ENCODE measurements at regions of chr12 and their contacts with region 1.

Region 1: GRCh38 chr12:51307655-51308593 is 16.1 kb downstream of the BIN2 start:
- DNase-seq: no peak
- H3K4me3 Mint-ChIP-seq: no peak overlapping the region
- H3K27ac Mint-ChIP-seq: peak overlapping the region; percentile 15
- H3K4me1 Mint-ChIP-seq: peaks cover 57% of the 10 kb centered on the region
- H3K27me3 Mint-ChIP-seq: no peaks in the 10 kb centered on the region

Region 2: DNA sequence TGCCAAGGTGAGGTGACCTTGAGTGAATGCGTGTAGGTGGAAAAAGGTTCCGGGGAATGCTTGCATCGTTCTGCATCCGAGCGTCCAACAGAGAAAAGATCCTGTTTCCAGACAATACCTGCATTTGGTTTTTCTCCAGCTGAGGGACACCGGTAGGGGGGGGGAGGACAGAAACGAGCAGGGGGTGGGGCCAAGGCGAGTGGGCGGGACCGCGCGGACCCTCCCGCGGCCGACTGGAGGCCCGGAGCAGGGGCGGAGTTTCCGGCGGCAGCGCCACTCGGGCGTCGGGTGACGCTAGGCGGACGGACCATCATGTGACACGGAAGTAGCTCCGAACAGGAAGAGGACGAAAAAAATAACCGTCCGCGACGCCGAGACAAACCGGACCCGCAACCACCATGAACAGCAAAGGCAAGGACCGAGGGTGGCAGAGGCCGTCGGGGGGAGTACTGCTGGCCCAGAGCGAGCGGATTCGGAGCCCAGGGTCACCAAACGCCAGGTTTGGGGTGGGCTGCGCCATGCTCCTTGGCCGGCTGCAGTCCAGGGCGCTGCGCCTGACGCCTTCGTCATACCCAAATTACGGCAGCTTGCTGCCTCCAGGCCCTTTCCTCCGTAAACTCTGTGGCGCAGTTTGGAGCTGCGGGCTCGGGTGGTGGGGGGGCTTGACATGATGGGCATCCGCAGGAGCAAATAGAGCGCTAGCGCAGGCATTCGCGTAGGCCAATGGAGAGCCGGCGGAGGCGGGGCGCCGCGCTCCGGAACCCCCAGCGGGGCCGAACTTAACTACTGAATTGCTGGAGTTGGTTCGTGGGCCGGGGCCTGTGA is 69.2 kb before region 1 on chr12 and contains the start of gene DAZAP2:
- CTCF ChIA-PET with region 1: no interaction called
- intact Hi-C with region 1: no loop called
- DNase-seq: peak; percentile 96
- H3K4me3 Mint-ChIP-seq: peak within 1 kb of the TSS; percentile 96
- H3K27ac Mint-ChIP-seq: peak within 1 kb of the TSS; percentile 99
- H3K4me1 Mint-ChIP-seq: peaks cover 37% of the 10 kb centered on the region
- H3K27me3 Mint-ChIP-seq: no peaks in the 10 kb centered on the region
- total RNA-seq, gene DAZAP2: 106 to 107 TPM

Region 3: DNA sequence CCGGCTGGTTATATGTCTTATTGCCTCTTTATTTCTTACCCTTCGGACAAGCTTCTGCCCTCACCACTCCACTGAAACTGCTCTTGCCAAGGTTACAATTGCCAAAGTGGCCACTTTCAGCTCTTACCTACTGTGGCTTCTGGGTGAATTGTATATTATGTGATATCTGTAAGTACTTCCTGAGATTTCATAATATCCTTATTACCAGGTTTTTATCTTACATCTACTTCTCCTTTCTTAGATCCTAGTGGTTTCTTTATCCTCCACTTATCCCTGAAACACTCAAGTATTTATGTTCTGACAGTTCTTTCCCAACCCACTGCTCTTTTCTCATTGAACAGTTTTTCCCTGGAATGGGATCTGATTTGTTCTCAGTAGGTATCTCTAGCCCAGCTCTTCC is 28.0 kb after region 1 on chr12:
- CTCF ChIA-PET with region 1: interaction called, 10 read pairs
- intact Hi-C with region 1: loop called (anchors 1 kb)
- DNase-seq: no peak
- H3K4me3 Mint-ChIP-seq: no peak overlapping the region
- H3K27ac Mint-ChIP-seq: no peak overlapping the region
- H3K4me1 Mint-ChIP-seq: peaks cover 8% of the 10 kb centered on the region
- H3K27me3 Mint-ChIP-seq: no peaks in the 10 kb centered on the region

Region 4: DNA sequence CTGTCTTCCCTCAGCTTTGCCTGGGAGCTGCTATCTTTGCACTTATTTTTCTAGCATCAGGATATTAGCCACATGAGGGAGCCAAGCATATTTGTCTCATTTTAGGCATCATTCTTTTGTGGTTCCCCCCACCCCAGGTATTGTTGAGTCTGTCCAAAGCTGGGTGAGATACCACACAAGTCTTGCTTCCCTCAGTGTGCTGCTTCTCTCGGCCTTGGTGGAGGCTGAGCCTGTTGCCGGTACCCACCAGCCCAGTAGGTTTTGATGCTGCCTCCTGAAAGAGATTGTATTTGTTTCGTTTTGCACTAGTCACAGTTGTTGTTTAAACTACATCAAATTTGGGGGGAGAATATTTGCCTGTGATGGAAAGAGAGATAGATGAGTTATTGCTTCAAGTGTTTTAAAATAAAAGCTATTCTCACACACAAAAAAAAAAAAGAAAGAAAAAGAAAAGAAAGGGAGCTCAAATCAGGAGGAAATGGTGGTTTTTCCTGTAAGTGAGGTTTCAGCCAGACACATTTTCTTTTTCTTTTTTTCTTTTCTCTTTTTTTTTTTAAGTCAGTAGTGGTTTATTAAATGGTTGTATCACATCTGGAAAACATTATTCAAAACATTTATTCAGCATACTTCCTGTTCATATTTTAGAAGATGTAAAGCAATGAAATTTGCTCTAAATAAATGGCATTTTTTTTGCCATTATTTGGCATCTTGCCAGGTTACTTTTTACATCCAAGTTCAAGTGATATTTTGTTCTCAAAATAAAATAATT is 175.2 kb after region 1 on chr12:
- CTCF ChIA-PET with region 1: no interaction called
- intact Hi-C with region 1: no loop called
- DNase-seq: peak; percentile 50
- H3K4me3 Mint-ChIP-seq: peak overlapping the region; percentile 62
- H3K27ac Mint-ChIP-seq: peak overlapping the region; percentile 88
- H3K4me1 Mint-ChIP-seq: peaks cover 40% of the 10 kb centered on the region
- H3K27me3 Mint-ChIP-seq: no peaks in the 10 kb centered on the region

Region 5: DNA sequence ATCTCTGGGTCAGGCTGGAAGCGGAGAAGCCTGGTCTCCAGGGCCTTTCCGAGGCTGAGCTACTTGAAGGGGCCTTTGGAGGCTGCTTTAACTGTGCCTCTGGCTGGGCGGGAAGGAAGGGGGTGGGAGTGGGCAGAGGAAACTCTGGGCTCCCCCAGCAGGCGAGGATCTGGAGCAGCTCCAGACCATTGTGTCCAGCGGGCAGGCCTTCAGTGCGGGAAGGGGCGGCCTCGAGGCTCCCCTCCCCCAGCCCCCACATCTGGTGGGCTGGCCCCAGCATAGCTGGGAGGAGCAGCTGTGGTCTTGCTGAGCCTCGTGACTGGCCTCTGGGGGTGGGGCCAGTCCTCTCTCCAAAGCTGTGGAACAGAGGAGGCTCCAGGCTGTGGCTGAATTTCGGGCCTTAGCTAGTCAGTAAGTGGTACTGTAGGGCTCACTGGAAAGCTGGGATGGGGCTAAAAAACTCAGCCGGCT is 702.3 kb after region 1 on chr12:
- CTCF ChIA-PET with region 1: no interaction called
- intact Hi-C with region 1: no loop called
- DNase-seq: no peak
- H3K4me3 Mint-ChIP-seq: no peak overlapping the region
- H3K27ac Mint-ChIP-seq: no peak overlapping the region
- H3K4me1 Mint-ChIP-seq: peaks cover 17% of the 10 kb centered on the region
- H3K27me3 Mint-ChIP-seq: peaks cover 3% of the 10 kb centered on the region